ENCODE measurements at regions of chr1 and their contacts with region 1.

Region 1: DNA sequence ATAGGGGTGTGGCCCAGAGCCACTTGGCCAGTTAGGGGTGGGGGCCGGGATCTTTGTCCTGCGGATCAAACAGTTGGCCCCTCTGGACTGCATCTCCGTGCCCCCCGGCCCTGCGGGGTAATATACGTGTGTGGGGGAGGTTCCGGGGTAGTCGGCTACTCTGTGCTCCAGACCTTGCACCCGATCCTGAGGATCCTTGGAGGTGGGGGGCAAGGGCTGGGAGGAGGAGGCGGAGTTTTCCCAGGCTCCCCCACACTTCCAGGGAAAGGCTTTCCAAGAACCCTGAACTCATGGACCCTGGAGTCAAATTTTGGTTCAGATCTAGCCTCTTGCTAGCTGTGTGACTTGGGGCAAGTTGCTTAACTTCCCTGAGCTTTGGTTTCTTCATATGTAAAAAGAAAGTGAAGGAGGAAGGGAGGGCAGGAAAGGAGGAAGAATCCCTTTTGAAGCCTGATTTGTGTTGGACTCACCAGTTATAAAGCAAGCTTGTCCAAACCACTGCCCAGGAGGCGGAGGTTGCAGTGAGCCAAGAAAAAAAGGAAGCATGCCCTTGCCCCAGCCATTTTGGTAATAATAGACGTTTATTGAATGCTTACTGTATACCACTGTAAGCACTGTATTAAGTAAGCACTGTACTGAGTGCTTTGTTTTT is 686 bp downstream of the MIIP start:
- DNase-seq: peak in 2 of 9 experiments; percentile 3 to 27
- ATAC-seq: no peak
- H3K4me3 ChIP-seq: peak overlapping the region; percentile 69 to 94
- H3K4me3 Mint-ChIP-seq: peak overlapping the region; percentile 90
- H3K27ac ChIP-seq: peak overlapping the region; percentile 48 to 59
- H3K27ac Mint-ChIP-seq: peak overlapping the region; percentile 45
- H3K4me1 ChIP-seq: peaks cover 11% of the 10 kb centered on the region
- H3K4me1 Mint-ChIP-seq: peaks cover 15% of the 10 kb centered on the region
- H3K27me3 ChIP-seq: no peaks in the 10 kb centered on the region
- H3K27me3 Mint-ChIP-seq: no peaks in the 10 kb centered on the region
- CTCF ChIP-seq: no peak

Region 2: DNA sequence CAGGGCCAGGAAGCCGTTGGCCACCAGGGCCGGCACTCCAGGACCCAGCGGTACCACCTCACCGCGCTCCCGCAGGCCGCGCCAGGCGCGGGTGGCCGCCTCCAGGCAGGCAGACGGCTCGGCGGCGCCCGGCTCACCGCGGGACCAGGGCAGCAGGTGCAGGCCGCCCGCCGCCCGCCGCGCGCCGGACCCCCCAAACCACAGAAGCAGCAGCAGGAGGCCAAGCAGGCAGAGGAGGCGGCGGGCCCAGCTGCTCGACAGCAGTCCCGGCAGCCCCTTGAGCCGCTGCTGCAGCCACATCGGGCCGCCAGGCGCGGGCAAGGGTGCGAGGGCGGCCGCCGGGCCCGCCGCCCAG is 94.1 kb before region 1 on chr1:
- CTCF ChIA-PET with region 1: no interaction called
- POLR2A ChIA-PET with region 1: no interaction called
- intact Hi-C with region 1: loop called in 1 of 2 experiments (anchors 1 kb)
- DNase-seq: peak in 2 of 9 experiments; percentile 12 to 20
- ATAC-seq: peak; percentile 34
- H3K4me3 ChIP-seq: peak overlapping the region in 1 of 2 experiments; percentile 26
- H3K4me3 Mint-ChIP-seq: peak overlapping the region; percentile 86
- H3K27ac ChIP-seq: no peak overlapping the region
- H3K27ac Mint-ChIP-seq: no peak overlapping the region
- H3K4me1 ChIP-seq: peaks cover 34% of the 10 kb centered on the region
- H3K4me1 Mint-ChIP-seq: peaks cover 29% of the 10 kb centered on the region
- H3K27me3 ChIP-seq: no peaks in the 10 kb centered on the region
- H3K27me3 Mint-ChIP-seq: no peaks in the 10 kb centered on the region
- CTCF ChIP-seq: no peak

Region 3: DNA sequence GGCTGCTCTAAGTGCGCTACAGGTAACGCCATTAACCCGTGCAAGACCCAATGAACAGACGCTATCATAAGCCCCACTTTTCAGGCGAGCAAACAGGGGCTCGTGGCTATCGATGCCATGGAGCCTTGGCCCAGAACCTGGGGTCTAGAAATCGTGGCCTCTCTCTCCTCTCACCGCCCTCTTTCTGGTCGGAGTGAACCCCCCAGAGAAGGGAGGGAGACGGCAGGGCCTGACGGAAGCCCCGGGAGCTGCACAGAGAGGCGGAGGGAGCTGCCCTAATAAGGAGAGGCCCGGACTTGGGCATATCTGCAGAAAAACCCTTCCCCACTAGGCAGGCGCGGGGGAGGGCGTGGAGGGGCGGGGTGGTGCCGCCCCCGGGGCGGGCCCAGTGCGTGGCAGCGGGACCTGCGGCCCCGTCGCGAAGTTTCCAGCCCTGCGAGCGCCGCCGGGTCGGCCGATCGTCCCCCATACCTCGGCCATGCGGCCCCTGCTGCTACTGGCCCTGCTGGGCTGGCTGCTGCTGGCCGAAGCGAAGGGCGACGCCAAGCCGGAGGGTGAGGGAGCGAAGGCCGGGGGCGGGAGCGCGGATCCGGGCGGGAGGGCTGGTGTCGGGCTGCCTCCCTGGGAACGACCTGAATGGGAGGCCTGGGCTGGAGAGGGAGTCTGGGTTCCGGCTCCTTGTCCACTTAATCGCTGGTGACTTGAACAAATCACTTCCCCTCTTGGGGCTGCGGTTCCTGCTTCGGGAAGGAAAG is 85.5 kb before region 1 on chr1 and contains the start of gene PLOD1:
- CTCF ChIA-PET with region 1: no interaction called
- POLR2A ChIA-PET with region 1: no interaction called
- intact Hi-C with region 1: loop called in 1 of 2 experiments (anchors 2 kb)
- DNase-seq: peak; percentile 74 to 91 (median 85)
- ATAC-seq: peak; percentile 100
- H3K4me3 ChIP-seq: peak within 1 kb of the TSS; percentile 63 to 71
- H3K4me3 Mint-ChIP-seq: peak within 1 kb of the TSS; percentile 84
- H3K27ac ChIP-seq: peak within 1 kb of the TSS; percentile 26 to 45
- H3K27ac Mint-ChIP-seq: no peak within 1 kb of the TSS
- H3K4me1 ChIP-seq: peaks cover 11% of the 10 kb centered on the region
- H3K4me1 Mint-ChIP-seq: peaks cover 7% of the 10 kb centered on the region
- H3K27me3 ChIP-seq: no peaks in the 10 kb centered on the region
- H3K27me3 Mint-ChIP-seq: no peaks in the 10 kb centered on the region
- CTCF ChIP-seq: no peak
- total RNA-seq, gene PLOD1: 2.0 to 2.4 TPM

Region 4: GRCh38 chr1:11970441-11971185 is 49.4 kb before region 1 on chr1:
- CTCF ChIA-PET with region 1: no interaction called
- POLR2A ChIA-PET with region 1: no interaction called
- intact Hi-C with region 1: no loop called
- DNase-seq: no peak
- ATAC-seq: no peak
- H3K4me3 ChIP-seq: no peak overlapping the region
- H3K4me3 Mint-ChIP-seq: no peak overlapping the region
- H3K27ac ChIP-seq: no peak overlapping the region
- H3K27ac Mint-ChIP-seq: no peak overlapping the region
- H3K4me1 ChIP-seq: no peaks in the 10 kb centered on the region
- H3K4me1 Mint-ChIP-seq: peaks cover 3% of the 10 kb centered on the region
- H3K27me3 ChIP-seq: no peaks in the 10 kb centered on the region
- H3K27me3 Mint-ChIP-seq: no peaks in the 10 kb centered on the region
- CTCF ChIP-seq: no peak